Activated naive CD4-positive, alpha-beta T cell treated with anti-CD3 and anti-CD28 coated beads, Interleukin-2, amount 10 ng/mL, durations not matched to agents 7 days and 5 days (primary cell): ENCODE measurements at regions of chr15 and their contacts with region 1.

Region 1: DNA sequence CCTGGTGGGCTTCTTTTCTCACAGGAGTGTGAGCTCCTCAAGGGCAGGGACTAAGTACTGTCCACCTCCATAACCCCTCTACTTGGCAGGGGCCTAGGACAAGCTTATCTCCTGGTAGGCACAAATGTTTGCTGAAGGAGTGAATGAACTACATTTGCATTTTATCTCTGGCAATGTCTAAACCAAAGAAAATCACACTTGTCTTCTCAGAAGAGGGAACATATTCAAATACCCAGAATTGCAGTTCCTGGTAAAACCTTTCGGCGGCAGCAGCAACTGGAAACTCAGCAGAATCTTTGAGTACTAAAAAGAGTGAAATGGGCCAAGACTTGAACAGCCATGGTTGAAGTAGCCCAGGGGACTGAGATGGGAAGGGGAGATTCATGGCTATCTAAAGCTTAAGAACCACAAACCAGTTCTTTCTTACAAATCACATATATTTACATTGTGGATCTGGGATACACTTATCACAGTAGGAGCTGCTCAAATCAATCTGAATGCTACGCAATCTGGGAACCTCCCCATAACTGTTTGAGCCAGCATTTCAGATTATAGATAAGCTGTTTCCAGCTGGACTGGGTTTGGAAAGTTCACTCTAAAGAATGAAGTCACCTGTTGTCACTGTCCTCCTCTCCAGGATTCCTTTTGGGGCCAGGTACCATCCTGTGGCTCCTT is 18.7 kb upstream of the PTPN9 start:
- DNase-seq: peak; percentile 77
- H3K4me3 Mint-ChIP-seq: peak overlapping the region; percentile 56
- H3K27ac Mint-ChIP-seq: peak overlapping the region; percentile 90
- H3K4me1 Mint-ChIP-seq: peaks cover 42% of the 10 kb centered on the region
- H3K27me3 Mint-ChIP-seq: no peaks in the 10 kb centered on the region

Region 2: DNA sequence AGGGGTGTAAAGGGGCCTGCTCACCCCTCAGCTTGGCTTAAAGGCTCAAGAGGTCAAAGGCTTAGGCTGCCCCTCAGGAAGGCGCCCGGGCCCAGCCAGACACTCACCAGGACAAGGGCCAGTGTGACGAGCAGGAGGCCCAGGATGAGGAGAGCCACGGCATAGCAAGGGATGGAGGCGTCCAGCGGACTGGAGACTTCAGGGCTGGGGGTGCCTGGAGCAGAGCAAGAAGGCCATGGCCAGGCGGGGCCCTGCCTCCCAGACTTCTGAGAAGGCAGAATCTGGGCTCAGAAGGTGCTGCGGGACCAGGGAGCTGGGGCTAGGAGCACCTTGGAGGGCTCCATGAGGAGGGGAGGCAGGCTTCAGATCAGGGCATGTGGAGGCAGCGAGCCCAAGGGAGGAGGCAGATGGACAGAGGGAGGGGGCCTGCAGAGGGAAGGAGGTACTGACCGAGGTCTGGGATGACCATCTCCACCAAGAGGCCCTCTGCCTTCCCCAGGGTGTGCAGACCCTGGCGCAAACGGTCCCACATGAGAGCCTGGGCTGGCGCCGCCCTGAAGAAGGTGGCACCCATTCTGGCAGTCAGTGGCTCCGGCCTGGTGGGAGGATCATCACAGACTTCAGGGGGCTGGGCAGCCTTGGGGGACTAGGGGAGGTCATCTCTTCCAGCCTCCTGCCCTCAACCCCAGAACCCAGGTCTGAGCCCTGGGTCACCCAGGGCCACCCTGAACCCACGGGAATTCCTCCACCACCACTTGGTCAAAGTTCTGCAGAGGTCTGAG is 371.7 kb before region 1 on chr15:
- CTCF ChIA-PET with region 1: no interaction called
- DNase-seq: peak; percentile 16
- H3K4me3 Mint-ChIP-seq: no peak overlapping the region
- H3K27ac Mint-ChIP-seq: no peak overlapping the region
- H3K4me1 Mint-ChIP-seq: no peaks in the 10 kb centered on the region
- H3K27me3 Mint-ChIP-seq: peaks cover 32% of the 10 kb centered on the region

Region 3: DNA sequence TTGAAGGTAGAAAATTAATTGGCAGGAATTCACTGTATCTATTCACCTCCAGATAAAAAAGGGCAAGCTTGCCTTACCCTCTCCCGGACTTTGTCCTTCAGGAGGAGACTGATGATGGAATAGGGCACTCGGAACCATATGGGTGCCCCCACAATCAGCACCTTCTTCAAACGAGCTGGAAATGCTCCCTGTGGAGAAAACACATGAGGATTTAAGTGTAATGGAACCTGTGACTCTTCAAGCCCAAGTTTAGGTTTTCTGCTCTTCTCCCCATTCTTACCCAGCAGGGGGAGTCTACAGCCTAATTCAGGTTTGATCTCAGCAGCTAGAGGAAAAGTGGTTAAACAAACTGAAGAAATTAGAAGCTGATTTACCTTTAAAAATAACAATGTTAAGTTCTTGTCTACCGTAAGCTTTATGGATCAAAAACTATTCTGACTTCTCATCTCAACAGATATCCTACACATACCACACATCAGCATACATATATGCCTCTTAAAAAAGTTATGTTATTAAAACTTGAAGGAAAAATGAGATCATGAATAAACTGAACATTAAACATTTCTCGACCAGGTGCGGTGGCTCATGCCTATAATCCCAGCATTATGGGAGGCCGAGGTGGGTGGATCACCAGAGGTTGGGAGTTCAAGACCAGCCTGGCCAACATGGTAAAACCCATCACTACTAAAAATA is 88.8 kb before region 1 on chr15:
- CTCF ChIA-PET with region 1: interaction called, 10 read pairs
- DNase-seq: peak; percentile 43
- H3K4me3 Mint-ChIP-seq: no peak overlapping the region
- H3K27ac Mint-ChIP-seq: peak overlapping the region; percentile 37
- H3K4me1 Mint-ChIP-seq: peaks cover 2% of the 10 kb centered on the region
- H3K27me3 Mint-ChIP-seq: no peaks in the 10 kb centered on the region

Region 4: GRCh38 chr15:75647370-75648155 is 49.8 kb after region 1 on chr15 and contains the start of gene SNX33:
- CTCF ChIA-PET with region 1: interaction called, 61 read pairs
- DNase-seq: peak; percentile 71
- H3K4me3 Mint-ChIP-seq: peak within 1 kb of the TSS; percentile 84
- H3K27ac Mint-ChIP-seq: peak within 1 kb of the TSS; percentile 64
- H3K4me1 Mint-ChIP-seq: peaks cover 25% of the 10 kb centered on the region
- H3K27me3 Mint-ChIP-seq: peaks cover 61% of the 10 kb centered on the region